AG04450 (cell line): ENCODE measurements at regions of chr6 and their contacts with region 1.

Region 1: DNA sequence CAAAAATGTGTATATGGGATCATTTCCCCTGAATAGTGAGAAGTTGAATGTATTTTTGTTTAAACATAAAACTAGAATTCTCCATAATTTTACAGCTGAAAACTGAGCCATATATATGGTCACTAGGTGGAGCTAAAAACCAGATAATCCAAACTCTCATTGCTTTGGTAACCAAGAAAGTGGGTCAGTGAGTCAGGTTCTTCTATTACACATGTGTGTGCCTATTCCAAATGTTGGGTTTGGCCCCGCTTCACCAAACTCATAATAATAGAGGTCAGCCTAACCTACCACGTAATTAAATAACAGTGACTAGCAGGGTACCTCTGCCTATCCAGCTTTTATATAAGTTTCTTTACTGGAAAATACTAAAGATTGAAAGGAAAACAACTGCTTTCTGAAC is 19.3 kb upstream of the RNGTT start:
- DNase-seq: peak; percentile 43
- H3K4me3 ChIP-seq: no peak overlapping the region
- H3K27ac ChIP-seq: no peak overlapping the region
- H3K27me3 ChIP-seq: peaks cover 3% of the 10 kb centered on the region
- CTCF ChIP-seq: peak; percentile 70

Region 2: DNA sequence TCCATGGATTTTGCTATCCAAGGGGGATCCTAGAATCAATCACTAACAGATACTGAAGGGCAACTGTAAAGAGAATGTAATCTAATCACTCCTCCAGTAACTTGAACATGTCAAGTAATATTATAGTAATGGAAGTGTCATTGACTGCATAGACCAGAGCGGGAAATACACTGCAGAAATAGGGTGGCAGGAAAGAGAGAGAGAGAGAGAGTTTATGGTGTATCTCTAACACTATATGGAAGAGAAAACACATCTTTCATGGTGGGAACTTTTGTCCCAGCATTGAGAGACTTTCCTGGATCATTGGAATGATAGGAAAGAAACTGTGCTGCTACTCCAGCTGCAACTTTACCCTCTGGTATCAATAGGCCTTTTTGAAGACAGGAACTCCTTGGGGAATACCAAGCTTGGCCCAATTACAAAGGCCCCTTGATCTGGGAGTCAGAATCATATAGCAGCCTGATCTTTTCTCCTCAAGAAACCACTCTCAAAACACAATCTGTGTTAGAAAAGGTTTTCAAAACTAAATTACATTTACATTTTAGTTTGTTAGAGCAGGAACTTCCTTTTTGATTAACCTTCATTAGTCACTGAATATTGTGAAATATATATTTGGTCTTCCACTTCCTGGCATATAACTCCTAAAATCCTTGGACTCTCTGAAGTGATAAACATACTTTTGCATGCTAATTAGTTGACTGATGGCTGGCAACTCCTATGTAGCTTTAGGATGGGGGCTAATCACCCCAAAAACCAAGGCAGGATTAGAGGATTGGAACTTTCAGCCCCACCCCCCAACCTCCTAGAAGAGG is 10.2 kb after region 1 on chr6:
- CTCF ChIA-PET with region 1: interaction called, 10 read pairs
- POLR2A ChIA-PET with region 1: no interaction called
- DNase-seq: no peak
- H3K4me3 ChIP-seq: no peak overlapping the region
- H3K27ac ChIP-seq: no peak overlapping the region
- H3K27me3 ChIP-seq: no peaks in the 10 kb centered on the region
- CTCF ChIP-seq: no peak

Region 3: GRCh38 chr6:89073014-89073620 is 90.4 kb after region 1 on chr6:
- CTCF ChIA-PET with region 1: interaction called, 36 read pairs
- POLR2A ChIA-PET with region 1: no interaction called
- DNase-seq: no peak
- H3K4me3 ChIP-seq: no peak overlapping the region
- H3K27ac ChIP-seq: no peak overlapping the region
- H3K27me3 ChIP-seq: peaks cover 3% of the 10 kb centered on the region
- CTCF ChIP-seq: no peak

Region 4: DNA sequence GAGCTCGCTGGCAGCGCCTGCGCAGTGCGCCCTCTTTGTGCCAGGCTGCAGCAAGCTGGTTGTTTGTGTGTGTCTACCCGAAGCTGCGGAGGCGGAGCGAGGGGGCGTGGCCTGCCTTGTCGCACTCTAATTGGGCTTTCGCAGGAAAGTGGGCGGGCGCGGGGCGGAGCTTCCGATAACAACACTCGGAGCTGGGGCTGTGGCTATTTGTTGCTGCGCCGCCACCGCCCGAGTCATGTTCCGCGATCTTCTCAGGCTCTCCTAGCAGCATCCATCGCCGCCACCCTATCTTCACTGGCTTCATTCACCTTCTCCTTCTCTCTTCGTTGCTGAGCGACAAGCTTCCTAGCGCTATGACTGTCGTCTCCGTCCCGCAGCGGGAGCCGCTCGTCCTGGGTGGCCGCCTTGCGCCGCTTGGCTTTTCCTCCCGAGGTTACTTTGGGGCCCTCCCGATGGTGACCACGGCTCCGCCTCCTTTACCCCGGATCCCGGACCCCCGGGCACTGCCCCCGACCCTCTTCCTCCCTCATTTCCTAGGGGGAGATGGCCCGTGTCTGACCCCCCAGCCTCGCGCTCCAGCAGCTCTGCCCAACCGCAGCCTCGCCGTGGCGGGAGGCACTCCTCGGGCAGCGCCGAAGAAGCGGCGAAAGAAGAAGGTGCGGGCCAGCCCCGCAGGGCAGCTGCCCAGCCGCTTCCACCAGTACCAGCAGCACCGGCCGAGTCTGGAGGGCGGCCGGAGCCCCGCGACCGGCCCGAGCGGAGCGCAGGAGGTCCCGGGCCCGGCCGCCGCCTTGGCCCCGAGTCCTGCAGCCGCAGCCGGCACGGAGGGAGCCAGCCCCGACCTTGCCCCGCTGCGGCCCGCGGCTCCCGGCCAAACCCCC is 98.1 kb after region 1 on chr6 and contains the start of gene PNRC1:
- CTCF ChIA-PET with region 1: interaction called, 36 read pairs
- POLR2A ChIA-PET with region 1: interaction called, 11 read pairs
- DNase-seq: peak; percentile 99
- H3K4me3 ChIP-seq: peak within 1 kb of the TSS; percentile 99
- H3K27ac ChIP-seq: peak within 1 kb of the TSS; percentile 98
- H3K27me3 ChIP-seq: peaks cover 3% of the 10 kb centered on the region
- CTCF ChIP-seq: no peak
- polyA plus RNA-seq, gene PNRC1: 21.0 and 22.6 TPM in 2 replicates

Region 5: DNA sequence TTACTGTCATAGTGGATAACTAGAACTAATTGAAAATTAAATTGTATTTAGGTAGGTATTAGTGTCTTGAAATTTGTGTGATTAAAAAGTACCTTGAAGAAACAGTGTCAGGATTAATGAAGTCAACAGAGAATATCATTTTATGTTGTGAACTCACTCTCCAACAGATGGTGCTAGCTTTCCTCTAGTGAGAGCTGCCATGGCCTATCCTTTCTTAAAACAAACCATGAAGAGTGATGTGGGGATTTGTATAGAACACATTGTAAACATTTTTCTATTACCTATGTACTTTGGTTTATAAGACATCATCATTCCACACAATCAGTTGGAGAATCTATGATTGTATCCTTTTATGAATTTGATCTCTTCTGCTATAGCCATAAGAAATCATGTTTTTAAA is 139.9 kb after region 1 on chr6:
- CTCF ChIA-PET with region 1: interaction called, 19 read pairs
- POLR2A ChIA-PET with region 1: interaction called, 7 read pairs
- DNase-seq: no peak
- H3K4me3 ChIP-seq: no peak overlapping the region
- H3K27ac ChIP-seq: no peak overlapping the region
- H3K27me3 ChIP-seq: peaks cover 10% of the 10 kb centered on the region
- CTCF ChIP-seq: peak; percentile 70

Region 6: GRCh38 chr6:89242574-89243330 is 260.0 kb after region 1 on chr6:
- CTCF ChIA-PET with region 1: interaction called, 130 read pairs
- POLR2A ChIA-PET with region 1: no interaction called
- DNase-seq: peak; percentile 34
- H3K4me3 ChIP-seq: no peak overlapping the region
- H3K27ac ChIP-seq: no peak overlapping the region
- H3K27me3 ChIP-seq: peaks cover 9% of the 10 kb centered on the region
- CTCF ChIP-seq: peak; percentile 70